A549 (cell line): ENCODE measurements at regions of chr2 and their contacts with region 1.

Region 1: GRCh38 chr2:86383844-86384243 is 46.4 kb upstream of the REEP1 start:
- DNase-seq: no peak
- ATAC-seq: no peak
- H3K4me3 ChIP-seq: no peak overlapping the region
- H3K27ac ChIP-seq: no peak overlapping the region
- H3K4me1 ChIP-seq: no peaks in the 10 kb centered on the region
- CTCF ChIP-seq: no peak
- EP300 ChIP-seq: no peak
- POLR2A ChIP-seq: no peak
- RAD21 ChIP-seq: no peak

Region 2: DNA sequence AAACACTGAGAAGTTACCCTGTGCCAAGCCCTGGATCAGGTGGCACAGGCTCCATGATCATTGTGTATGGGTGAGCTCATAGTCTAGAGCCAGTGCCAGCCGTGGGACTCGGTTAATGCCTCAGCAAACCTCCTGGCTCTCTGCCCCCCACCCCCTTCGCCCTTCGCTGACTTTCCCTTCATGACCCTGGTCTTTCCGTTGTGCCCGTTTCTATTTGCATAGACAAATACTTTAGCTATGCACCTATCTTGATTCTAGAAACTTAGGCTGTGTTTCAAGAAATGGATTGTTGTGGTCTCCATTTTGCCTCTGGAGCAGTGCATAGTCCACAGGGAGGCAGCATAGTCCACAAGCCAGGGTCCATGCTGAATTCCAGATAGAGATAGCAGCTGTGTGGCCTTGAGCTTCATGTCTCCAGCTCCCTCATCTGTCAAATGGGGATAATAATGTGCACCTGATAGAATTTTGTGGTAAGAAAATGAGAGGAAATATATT is 12.5 kb after region 1 on chr2:
- CTCF ChIA-PET with region 1: interaction called, 21 read pairs
- POLR2A ChIA-PET with region 1: no interaction called
- DNase-seq: peak; percentile 38 to 72
- ATAC-seq: peak; percentile 85 to 94
- H3K4me3 ChIP-seq: no peak overlapping the region
- H3K27ac ChIP-seq: 0 out of 6 replicates have a peak overlapping the region, but pooled peaks of 1 of the 2 experiments have one; percentile 27
- H3K4me1 ChIP-seq: 0 out of 3 replicates have a peak, but pooled peaks cover 3% of the 10 kb centered on the region
- CTCF ChIP-seq: peak; percentile 55
- EP300 ChIP-seq: no peak
- POLR2A ChIP-seq: no peak
- RAD21 ChIP-seq: peak; percentile 71 to 79